WTC11 (cell line): ENCODE measurements at regions of chr10 and their contacts with region 1.

Region 1: GRCh38 chr10:69914398-69915214 is 112.9 kb downstream of the COL13A1 start:
- DNase-seq: peak; percentile 87
- ATAC-seq: peak; percentile 89
- H3K4me3 Mint-ChIP-seq: no peak overlapping the region
- H3K27ac Mint-ChIP-seq: no peak overlapping the region
- H3K4me1 Mint-ChIP-seq: peaks cover 23% of the 10 kb centered on the region
- H3K27me3 Mint-ChIP-seq: peaks cover 3% of the 10 kb centered on the region; the same call in 1 of the 2 replicates
- CTCF ChIP-seq: peak; percentile 99

Region 2: DNA sequence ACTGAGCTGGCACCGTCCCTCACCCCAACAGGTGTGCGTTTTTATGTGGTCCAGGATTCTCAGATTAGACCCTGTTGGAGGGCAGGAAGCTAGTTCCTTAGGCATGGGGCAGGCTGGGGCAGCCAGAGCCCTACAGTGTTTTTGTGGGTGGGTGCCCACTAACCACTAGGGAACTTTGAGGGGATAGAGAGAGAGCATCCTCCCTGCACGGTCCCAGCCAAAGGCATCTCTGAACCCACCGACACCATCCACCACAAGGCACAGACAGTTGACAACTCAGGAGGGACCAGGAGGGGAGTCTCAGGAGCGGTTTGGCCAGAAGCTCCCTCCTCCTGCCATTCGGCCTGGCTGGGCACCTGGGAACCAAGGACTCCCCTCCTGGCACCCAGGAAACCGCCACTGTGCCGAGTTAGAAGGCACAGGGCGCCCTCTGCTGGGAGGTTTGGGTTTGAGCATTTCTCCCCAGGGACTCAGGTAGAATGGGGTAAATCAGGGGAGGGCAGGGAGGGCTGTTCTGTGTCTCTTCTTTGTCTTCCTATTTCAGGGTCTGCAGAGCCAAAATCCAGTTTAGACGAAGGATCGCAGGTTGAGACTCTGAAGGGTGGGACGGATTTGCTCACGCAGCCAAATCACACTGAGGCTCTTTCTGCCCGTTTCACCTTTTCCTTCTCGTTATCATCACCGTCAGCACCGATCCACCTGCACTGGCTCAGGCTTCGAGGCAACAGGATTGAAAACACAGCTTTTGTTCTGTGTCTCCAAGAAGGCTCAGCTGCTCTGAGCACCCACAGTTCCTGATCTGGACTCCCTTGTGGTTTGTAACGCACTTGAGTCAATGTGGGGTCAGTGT is 197.7 kb before region 1 on chr10:
- CTCF ChIA-PET with region 1: interaction called, 15 read pairs
- POLR2A ChIA-PET with region 1: no interaction called
- DNase-seq: peak; percentile 84
- ATAC-seq: peak; percentile 88
- H3K4me3 Mint-ChIP-seq: no peak overlapping the region
- H3K27ac Mint-ChIP-seq: 0 out of 2 replicates have a peak overlapping the region, but pooled peaks have one; percentile 8
- H3K4me1 Mint-ChIP-seq: peaks cover 7% of the 10 kb centered on the region
- H3K27me3 Mint-ChIP-seq: peaks cover 8% of the 10 kb centered on the region
- CTCF ChIP-seq: peak; percentile 80

Region 3: GRCh38 chr10:69800109-69800508 is 114.5 kb before region 1 on chr10:
- CTCF ChIA-PET with region 1: interaction called, 92 read pairs
- POLR2A ChIA-PET with region 1: no interaction called
- DNase-seq: peak; percentile 72
- ATAC-seq: peak; percentile 58
- H3K4me3 Mint-ChIP-seq: no peak overlapping the region; the same call in 1 of the 2 replicates
- H3K27ac Mint-ChIP-seq: no peak overlapping the region
- H3K4me1 Mint-ChIP-seq: peaks cover 37% of the 10 kb centered on the region
- H3K27me3 Mint-ChIP-seq: peaks cover 74% of the 10 kb centered on the region
- CTCF ChIP-seq: peak; percentile 48; the same call in 1 of the 2 replicates

Region 4: DNA sequence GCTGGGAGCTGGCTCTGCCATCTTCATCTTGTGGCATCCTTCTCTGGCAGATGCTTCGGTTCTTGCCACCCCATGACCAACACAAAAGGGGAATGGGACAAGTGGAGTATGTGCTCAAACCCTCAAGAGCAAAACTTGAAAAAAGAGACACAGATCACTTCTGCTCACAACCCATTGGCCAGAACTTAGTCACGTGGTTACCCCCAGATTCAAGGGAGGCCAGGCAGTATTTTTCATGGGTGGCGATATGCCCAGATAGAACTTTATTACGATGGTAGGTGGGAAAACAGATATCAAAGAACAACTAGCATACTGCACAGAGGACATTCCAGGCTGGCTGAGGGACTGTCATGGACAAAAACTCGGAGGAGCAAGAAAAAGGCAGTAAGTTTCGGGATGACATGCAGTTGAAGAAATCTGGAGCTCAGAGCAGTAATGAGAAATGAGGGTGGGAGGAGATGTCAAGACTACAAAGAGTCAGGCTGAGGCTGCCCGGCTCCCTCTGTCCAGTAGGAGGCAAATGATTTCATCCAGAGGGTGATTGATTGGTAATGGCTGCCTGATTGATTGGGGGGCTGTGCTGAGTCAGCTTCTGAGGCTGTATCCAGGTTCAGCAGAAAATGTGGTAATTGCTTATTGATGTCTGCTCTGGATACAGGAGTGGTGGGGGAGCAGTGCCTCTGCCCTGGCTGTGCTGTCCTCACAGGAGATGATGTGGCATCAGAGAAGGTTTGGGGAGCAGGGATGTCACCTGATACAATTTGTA is 87.6 kb before region 1 on chr10:
- CTCF ChIA-PET with region 1: interaction called, 17 read pairs
- POLR2A ChIA-PET with region 1: no interaction called
- DNase-seq: peak; percentile 36
- ATAC-seq: peak; percentile 79
- H3K4me3 Mint-ChIP-seq: no peak overlapping the region
- H3K27ac Mint-ChIP-seq: no peak overlapping the region
- H3K4me1 Mint-ChIP-seq: peaks cover 24% of the 10 kb centered on the region
- H3K27me3 Mint-ChIP-seq: peaks cover 5% of the 10 kb centered on the region; the same call in 1 of the 2 replicates
- CTCF ChIP-seq: no peak

Region 5: GRCh38 chr10:69861251-69862240 is 53.1 kb before region 1 on chr10:
- CTCF ChIA-PET with region 1: interaction called, 84 read pairs
- POLR2A ChIA-PET with region 1: no interaction called
- DNase-seq: no peak
- ATAC-seq: peak; percentile 73
- H3K4me3 Mint-ChIP-seq: no peak overlapping the region
- H3K27ac Mint-ChIP-seq: no peak overlapping the region
- H3K4me1 Mint-ChIP-seq: peaks cover 59% of the 10 kb centered on the region
- H3K27me3 Mint-ChIP-seq: peaks cover 9% of the 10 kb centered on the region
- CTCF ChIP-seq: no peak

Region 6: DNA sequence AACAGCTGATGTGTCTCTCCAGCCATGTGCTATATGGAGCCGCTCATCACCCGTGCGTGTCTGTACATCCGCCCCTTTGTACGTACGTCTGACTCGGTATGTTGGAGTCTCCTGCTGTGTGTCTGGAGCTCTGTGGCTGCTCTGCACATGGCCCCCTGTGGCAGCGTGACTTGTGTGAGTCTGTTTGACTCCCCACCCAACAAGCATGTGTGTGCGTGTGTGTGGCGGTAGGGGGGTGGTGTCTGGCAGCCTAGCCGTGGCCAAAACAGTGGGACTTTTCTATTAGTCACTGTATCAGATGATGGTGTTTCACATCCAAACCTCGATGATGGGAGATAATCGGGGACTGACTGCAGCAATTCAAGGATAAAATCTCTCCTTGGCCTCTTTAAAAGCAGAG is 18.8 kb before region 1 on chr10:
- CTCF ChIA-PET with region 1: interaction called, 126 read pairs
- POLR2A ChIA-PET with region 1: no interaction called
- DNase-seq: no peak
- ATAC-seq: no peak
- H3K4me3 Mint-ChIP-seq: no peak overlapping the region
- H3K27ac Mint-ChIP-seq: no peak overlapping the region
- H3K4me1 Mint-ChIP-seq: peaks cover 26% of the 10 kb centered on the region
- H3K27me3 Mint-ChIP-seq: peaks cover 7% of the 10 kb centered on the region
- CTCF ChIP-seq: no peak

Region 7: DNA sequence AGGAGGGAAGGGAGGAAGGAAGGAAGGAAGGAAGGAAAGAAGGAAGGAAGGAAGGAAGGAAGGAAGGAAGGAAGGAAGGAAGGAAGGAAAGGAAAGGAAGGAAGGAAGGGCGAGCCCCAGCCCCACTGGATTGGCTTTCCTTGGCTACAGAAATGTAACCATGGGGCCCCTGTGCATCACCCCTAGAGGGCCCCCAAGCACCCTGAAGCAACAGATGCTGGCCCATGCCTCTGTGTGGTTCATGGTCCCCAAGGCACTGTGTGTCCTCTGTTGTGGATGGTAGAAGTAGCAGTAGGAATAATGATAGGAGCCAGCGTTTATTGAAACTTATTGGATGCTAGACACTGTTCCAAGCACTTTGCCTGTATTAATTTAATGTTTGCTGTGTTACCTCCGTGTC is 21.5 kb after region 1 on chr10:
- CTCF ChIA-PET with region 1: interaction called, 11 read pairs
- POLR2A ChIA-PET with region 1: no interaction called
- DNase-seq: peak; percentile 41
- ATAC-seq: peak; percentile 81
- H3K4me3 Mint-ChIP-seq: no peak overlapping the region
- H3K27ac Mint-ChIP-seq: no peak overlapping the region
- H3K4me1 Mint-ChIP-seq: no peaks in the 10 kb centered on the region
- H3K27me3 Mint-ChIP-seq: no peaks in the 10 kb centered on the region; the same call in 1 of the 2 replicates
- CTCF ChIP-seq: no peak